ENCODE measurements at regions of chr14 and their contacts with region 1.

Region 1: GRCh38 chr14:93115069-93115820 is 480 bp downstream of the ITPK1 start:
- DNase-seq: peak; percentile 86 to 91
- ATAC-seq: peak; percentile 83 to 94 (median 92)
- H3K4me3 ChIP-seq: peak overlapping the region; percentile 52 to 95 (median 86)
- H3K27ac ChIP-seq: peak overlapping the region; percentile 93 to 99 (median 98)
- H3K4me1 ChIP-seq: peaks cover 15 to 49% (median 36%) of the 10 kb centered on the region in 9 donors
- H3K27me3 ChIP-seq: no peaks in the 10 kb centered on the region
- CTCF ChIP-seq: peak in 2 of 9 donors; percentile 0 to 10

Region 2: DNA sequence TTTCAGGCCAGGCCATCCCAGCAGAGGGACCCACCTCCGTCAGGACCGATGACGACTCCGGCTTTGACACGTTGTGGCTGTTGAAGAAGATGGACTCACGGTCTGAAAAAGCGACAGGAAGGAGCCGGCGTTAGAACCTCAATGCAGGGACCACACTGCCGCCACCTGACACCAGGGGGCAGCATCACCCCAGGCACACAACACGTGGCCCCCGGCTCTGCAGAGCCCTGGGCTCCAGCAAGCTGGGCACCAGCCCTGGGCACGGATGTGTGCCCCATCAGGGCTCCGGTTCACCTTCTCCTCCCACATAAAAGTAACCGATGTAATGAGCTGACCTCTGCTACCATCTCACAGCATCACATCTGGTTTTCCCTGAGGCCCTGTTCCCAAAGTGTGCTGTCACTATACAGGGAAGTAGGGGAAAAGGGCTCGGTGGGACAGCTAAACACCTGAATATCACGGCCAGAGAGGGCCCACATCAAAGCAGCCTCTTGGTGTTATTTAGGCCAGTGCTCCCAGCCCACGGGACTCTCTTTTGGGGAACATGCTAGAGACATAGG is 163.3 kb before region 1 on chr14:
- intact Hi-C with region 1: loop called in 4 of 10 experiments (anchors 2 to 5 kb)
- DNase-seq: peak; percentile 76 to 85
- ATAC-seq: peak; percentile 73 to 91 (median 82)
- H3K4me3 ChIP-seq: no peak overlapping the region
- H3K27ac ChIP-seq: peak overlapping the region; percentile 50 to 79 (median 69)
- H3K4me1 ChIP-seq: peaks cover 9 to 64% (median 38%) of the 10 kb centered on the region in 9 donors
- H3K27me3 ChIP-seq: no peaks in the 10 kb centered on the region
- CTCF ChIP-seq: peak; percentile 92 to 98 (median 97)

Region 3: DNA sequence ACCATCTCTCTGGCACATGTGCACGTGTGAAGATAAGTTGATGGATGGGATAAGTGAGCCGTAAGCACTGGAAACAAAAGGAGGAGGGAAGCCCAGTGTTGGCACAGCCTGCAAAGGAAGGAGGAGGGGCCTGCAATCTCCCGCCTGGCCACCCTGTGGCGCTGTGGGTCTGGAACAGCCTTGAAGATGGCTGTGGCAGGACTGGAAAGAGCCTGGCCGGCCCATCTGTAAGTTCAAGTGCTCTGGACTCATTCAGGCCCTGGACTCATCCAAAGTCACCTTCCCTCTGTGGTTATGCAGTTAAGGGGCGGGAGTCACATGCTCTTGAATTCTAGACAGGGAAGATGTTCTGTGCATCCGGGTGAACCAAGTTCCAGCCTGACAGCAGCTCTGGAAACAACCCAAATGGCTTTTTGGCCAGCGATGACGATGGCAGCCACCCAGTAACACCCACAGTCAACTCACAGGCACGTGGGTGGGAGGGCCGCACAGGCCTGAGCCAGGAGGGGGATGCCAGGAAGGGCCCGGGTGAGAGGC is 141.9 kb before region 1 on chr14:
- intact Hi-C with region 1: loop called in 3 of 10 experiments (anchors 5 kb)
- DNase-seq: peak; percentile 79 to 82
- ATAC-seq: peak; percentile 82 to 94 (median 92)
- H3K4me3 ChIP-seq: no peak overlapping the region
- H3K27ac ChIP-seq: peak overlapping the region; percentile 45 to 88 (median 74)
- H3K4me1 ChIP-seq: peaks cover 3 to 51% (median 26%) of the 10 kb centered on the region in 9 donors
- H3K27me3 ChIP-seq: no peaks in the 10 kb centered on the region
- CTCF ChIP-seq: peak; percentile 66 to 83 (median 75)

Region 4: GRCh38 chr14:93012951-93013719 is 102.1 kb before region 1 on chr14:
- intact Hi-C with region 1: loop called in 1 of 10 experiments (anchors 10 kb)
- DNase-seq: no peak
- ATAC-seq: peak in 2 of 8 donors; percentile 15 to 28
- H3K4me3 ChIP-seq: no peak overlapping the region
- H3K27ac ChIP-seq: peak overlapping the region in 6 of 10 donors; percentile 2 to 58 (median 31)
- H3K4me1 ChIP-seq: peaks cover 48 to 100% (median 95%) of the 10 kb centered on the region in 9 donors
- H3K27me3 ChIP-seq: no peaks in the 10 kb centered on the region
- CTCF ChIP-seq: no peak

Region 5: GRCh38 chr14:93042968-93043940 is 72.0 kb before region 1 on chr14:
- intact Hi-C with region 1: loop called in 2 of 10 experiments (anchors 10 kb)
- DNase-seq: peak; percentile 72 to 74
- ATAC-seq: peak; percentile 52 to 82 (median 76)
- H3K4me3 ChIP-seq: no peak overlapping the region
- H3K27ac ChIP-seq: peak overlapping the region; percentile 46 to 92 (median 86)
- H3K4me1 ChIP-seq: peaks cover 18 to 95% (median 83%) of the 10 kb centered on the region in 9 donors
- H3K27me3 ChIP-seq: no peaks in the 10 kb centered on the region
- CTCF ChIP-seq: no peak

Region 6: DNA sequence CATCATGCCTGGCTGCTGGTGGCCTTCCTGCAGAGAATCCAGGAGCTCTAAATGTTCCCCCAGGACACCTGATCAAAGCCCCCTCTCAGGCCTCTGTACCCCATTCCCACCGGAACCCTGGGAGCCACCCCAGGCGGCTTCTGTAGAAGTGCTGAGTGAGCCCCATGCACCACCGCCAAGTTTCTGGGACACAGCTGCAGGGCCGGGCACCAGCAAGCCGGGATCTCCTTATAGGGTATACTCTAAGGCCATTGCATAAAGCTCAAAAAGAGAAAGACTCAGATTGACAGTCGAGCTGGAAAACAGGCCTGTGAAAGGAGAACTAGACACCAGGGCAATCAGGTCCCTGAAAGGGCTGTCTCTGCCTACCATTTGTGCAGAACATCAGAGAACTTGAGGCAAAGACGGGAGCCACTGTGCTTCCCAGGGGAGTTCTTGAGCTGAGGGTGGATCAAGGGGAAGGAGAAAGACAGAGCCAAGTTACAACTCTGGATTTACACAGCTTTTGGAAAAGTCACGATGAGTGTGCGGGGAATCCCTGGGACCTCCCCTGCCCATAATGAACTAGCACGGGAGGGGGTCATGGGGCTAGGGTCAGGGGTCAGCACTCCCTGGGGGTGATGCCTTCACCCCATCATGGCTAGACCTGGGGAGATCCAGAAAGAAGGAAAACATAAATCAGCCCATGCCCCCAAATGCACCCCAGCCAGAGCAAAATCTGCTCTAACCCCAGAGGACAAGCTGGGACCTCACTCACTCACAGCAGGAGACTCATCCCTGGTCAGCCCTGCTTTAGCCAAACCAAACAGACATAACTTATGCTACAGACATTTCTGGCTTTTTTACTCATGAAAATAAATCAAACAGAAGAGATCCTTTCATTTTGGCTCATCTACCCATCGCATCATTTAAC is 50.6 kb before region 1 on chr14:
- intact Hi-C with region 1: loop called in 2 of 10 experiments (anchors 5 kb)
- DNase-seq: peak; percentile 40 to 47
- ATAC-seq: peak; percentile 31 to 73 (median 60)
- H3K4me3 ChIP-seq: no peak overlapping the region
- H3K27ac ChIP-seq: peak overlapping the region in 9 of 10 donors; percentile 31 to 63 (median 44)
- H3K4me1 ChIP-seq: peaks cover 17 to 81% (median 67%) of the 10 kb centered on the region in 9 donors
- H3K27me3 ChIP-seq: no peaks in the 10 kb centered on the region
- CTCF ChIP-seq: no peak

Region 7: DNA sequence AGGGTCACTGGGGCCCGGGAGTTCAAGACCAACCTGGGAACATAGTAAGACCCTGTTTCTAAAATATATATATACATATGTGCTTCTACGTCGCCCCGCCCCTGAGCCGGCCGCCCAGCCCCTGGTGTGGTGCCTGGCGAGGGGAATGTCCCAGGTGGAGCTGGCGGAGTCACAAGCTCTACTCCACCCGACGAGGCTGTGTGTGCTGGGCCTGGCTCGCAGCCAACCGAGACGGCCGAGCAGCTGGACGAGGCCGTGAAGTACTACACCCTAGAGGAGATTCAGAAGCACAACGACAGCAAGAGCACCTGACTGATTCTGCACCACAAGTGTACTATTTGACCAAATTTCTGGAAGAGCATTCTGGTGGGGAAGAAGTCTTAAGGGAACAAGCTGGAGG is 22.6 kb after region 1 on chr14:
- intact Hi-C with region 1: loop called in 1 of 10 experiments (anchors 2 kb)
- DNase-seq: peak in 1 of 2 donors; percentile 63
- ATAC-seq: peak; percentile 61 to 79 (median 74)
- H3K4me3 ChIP-seq: no peak overlapping the region
- H3K27ac ChIP-seq: no peak overlapping the region
- H3K4me1 ChIP-seq: peaks cover 0 to 9% (median 0%) of the 10 kb centered on the region in 9 donors
- H3K27me3 ChIP-seq: no peaks in the 10 kb centered on the region
- CTCF ChIP-seq: peak in 4 of 9 donors; percentile 12 to 30 (median 21)